Transverse colon (tissue), 4 donors: ENCODE measurements at regions of chr10 and their contacts with region 1.

Region 1: DNA sequence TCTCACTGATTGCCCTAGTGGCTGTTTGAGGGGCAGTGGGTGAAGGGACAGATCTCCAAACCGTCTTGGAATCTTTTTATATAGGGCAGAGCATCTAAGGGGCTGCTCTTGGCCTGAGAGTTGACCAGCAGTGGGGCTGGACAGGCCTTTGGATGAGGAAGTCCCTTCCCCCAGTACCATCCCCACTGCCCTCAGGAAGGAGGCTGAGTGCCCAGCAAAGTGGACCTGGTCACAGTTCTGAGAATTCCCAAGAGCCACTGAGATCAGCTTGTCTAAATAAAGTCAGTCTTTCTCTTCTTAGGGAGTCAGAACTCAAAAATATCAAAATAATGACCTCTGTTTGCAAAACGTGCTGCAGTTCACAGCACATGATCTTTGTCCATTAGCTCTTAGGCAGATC is 5.6 kb downstream of the GDF10 start:
- DNase-seq: no peak
- H3K4me3 ChIP-seq: no peak overlapping the region
- H3K27ac ChIP-seq: no peak overlapping the region
- H3K4me1 ChIP-seq: peaks cover 0 to 2% (median 2%) of the 10 kb centered on the region in 4 donors
- H3K27me3 ChIP-seq: peaks cover 20% of the 10 kb centered on the region
- CTCF ChIP-seq: no peak
- EP300 ChIP-seq: no peak
- POLR2A ChIP-seq: no peak

Region 2: DNA sequence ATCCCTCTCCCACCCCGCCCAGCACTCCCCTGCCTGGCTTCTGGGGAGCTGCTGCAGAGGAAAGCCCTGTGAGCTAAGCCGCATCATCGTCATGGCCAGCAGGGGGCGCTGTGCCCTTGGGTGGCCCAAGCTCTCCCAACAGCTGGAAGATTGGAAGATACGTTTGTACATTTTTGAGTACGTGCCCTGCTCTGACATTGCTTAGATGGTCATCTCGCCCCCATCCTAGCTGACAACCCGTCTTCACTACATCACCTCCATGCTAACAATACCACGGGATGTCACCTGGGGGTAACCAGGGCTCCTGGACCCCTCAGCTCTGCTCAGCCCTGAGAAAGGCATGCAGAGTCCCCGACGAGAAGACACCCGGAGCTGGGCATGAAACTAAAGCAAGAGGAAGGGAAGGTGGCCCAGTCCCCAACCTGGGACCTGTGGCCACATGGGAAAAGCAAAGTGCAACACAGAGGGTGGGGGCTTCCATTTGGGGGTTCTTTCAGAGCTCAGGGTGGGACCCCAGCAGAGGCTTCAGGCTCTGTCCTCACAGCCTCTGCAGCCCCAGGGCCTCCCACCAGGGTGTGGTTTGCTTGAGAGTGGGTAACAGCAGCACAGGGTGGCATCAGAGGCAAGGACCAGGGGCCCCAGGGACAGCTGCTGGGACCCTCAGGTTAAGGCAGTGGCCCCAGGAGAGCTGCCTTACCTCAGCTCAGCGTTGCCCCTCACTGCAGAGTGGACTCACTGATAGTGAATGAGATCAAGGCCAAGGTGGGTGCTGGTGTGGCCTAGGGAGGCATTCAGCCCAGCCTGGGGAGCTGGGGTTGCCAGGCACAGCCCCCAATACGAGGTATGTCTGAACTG is 257.7 kb before region 1 on chr10:
- in situ Hi-C with region 1: loop called in 2 of 4 experiments (anchors 5 to 25 kb)
- intact Hi-C with region 1: loop called (anchors 1 kb)
- DNase-seq: peak; percentile 83
- H3K4me3 ChIP-seq: no peak overlapping the region
- H3K27ac ChIP-seq: no peak overlapping the region
- H3K4me1 ChIP-seq: no peaks in the 10 kb centered on the region
- H3K27me3 ChIP-seq: no peaks in the 10 kb centered on the region
- CTCF ChIP-seq: peak; percentile 71 to 91 (median 82)
- EP300 ChIP-seq: no peak
- POLR2A ChIP-seq: no peak